Dendritic cell treated with granulocyte-macrophage colony-stimulating factor and Interleukin-4, amounts not matched to agents 40 ng/mL and 50 ng/mL, for 4 days (primary cell): ENCODE measurements at regions of chr14 and their contacts with region 1.

Region 1: DNA sequence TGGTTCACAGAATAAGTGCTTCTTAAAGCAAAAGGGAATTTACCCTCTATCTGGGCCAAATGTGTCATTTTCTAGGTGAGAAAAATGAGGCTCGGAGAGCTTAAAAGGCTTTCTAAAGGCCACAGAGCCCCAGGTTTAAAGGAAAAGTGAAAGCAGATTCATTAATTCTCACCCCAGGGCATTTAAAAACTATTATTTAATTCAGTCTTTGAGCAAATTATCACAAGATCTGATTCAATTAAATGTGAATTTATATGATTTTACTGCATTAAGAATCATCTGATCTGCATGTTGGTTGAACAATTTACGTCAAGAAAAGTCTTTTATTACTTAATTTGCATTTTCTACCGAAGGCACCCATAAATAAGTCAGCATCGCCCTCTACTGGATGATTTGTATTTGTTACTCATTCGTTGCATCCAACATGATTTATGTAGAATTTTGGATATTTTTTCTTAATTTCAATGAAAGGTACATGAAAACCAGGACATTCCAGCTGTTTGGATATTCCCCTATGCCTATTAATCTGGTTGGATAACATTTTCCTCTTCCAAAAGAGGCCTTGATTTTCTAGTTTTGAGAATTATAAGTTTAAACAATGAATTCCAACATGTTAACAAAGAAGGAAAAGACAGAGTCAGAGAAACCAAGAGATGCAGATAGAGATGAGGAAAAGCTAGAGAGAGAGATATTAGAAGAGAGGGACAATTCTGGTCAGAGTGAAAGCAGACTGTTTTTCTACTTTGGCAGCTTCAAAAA is 19.1 kb upstream of the DHRS7 start:
- H3K4me3 Mint-ChIP-seq: peak overlapping the region; percentile 44
- H3K27ac Mint-ChIP-seq: no peak overlapping the region
- H3K4me1 Mint-ChIP-seq: peaks cover 6% of the 10 kb centered on the region
- H3K27me3 Mint-ChIP-seq: no peaks in the 10 kb centered on the region

Region 2: DNA sequence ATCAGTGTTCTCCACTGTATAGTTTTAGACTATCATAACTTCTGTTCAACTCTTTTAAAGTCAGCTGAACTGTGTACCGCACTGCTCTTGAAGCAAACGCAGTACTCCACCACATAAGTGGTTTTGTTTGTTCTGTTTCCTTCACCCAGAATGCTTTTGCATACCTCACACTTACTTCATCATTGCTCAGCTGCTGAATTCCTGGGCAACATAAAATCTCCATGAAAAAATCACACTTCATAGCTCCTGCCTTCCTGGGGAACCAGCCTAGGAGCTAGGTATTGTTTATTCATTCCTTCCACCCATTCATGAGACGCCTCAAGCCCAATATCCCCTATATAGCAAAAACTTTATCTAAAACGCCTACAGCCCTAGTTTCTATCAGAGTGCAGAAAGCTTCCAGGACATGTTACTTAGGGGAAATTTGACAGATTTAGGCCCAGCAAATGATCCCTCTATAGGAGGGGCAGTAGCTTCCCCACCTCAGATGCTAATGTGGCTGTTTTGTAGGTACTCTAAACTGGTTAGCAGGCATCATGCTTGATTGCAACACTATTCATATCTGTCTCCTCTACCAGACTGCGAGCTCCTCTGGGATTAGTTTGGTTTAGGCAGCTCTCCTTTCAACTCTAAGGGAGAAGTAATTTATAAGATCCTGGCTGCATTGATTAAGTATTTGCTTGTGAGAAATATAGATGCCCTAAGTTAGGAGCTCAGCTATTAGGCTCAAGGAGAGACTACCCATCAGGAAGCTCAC is 219.9 kb before region 1 on chr14:
- intact Hi-C with region 1: loop called (anchors 1 kb)
- H3K4me3 Mint-ChIP-seq: no peak overlapping the region
- H3K27ac Mint-ChIP-seq: no peak overlapping the region
- H3K4me1 Mint-ChIP-seq: peaks cover 12% of the 10 kb centered on the region
- H3K27me3 Mint-ChIP-seq: peaks cover 8% of the 10 kb centered on the region

Region 3: GRCh38 chr14:60125918-60126317 is 58.4 kb before region 1 on chr14:
- intact Hi-C with region 1: no loop called
- H3K4me3 Mint-ChIP-seq: no peak overlapping the region
- H3K27ac Mint-ChIP-seq: no peak overlapping the region
- H3K4me1 Mint-ChIP-seq: peaks cover 5% of the 10 kb centered on the region
- H3K27me3 Mint-ChIP-seq: no peaks in the 10 kb centered on the region

Region 4: GRCh38 chr14:60151715-60152114 is 32.6 kb before region 1 on chr14:
- intact Hi-C with region 1: no loop called
- H3K4me3 Mint-ChIP-seq: no peak overlapping the region
- H3K27ac Mint-ChIP-seq: peak overlapping the region; percentile 38
- H3K4me1 Mint-ChIP-seq: peaks cover 32% of the 10 kb centered on the region
- H3K27me3 Mint-ChIP-seq: no peaks in the 10 kb centered on the region